ENCODE measurements at regions of chr13 and their contacts with region 1.

Region 1: GRCh38 chr13:59906413-59907049 is 257.2 kb downstream of the DIAPH3 start:
- DNase-seq: peak; percentile 75
- H3K4me3 ChIP-seq: no peak overlapping the region
- H3K27ac ChIP-seq: peak overlapping the region; percentile 64
- H3K4me1 ChIP-seq: peaks cover 32% of the 10 kb centered on the region
- H3K27me3 ChIP-seq: no peaks in the 10 kb centered on the region
- CTCF ChIP-seq: peak; percentile 79

Region 2: GRCh38 chr13:59391696-59392095 is 514.8 kb before region 1 on chr13:
- CTCF ChIA-PET with region 1: no interaction called
- POLR2A ChIA-PET with region 1: no interaction called
- intact Hi-C with region 1: loop called (anchors 10 kb)
- DNase-seq: peak; percentile 91
- H3K4me3 ChIP-seq: no peak overlapping the region
- H3K27ac ChIP-seq: peak overlapping the region; percentile 58
- H3K4me1 ChIP-seq: peaks cover 23% of the 10 kb centered on the region
- H3K27me3 ChIP-seq: no peaks in the 10 kb centered on the region
- CTCF ChIP-seq: peak; percentile 93

Region 3: GRCh38 chr13:59771272-59771671 is 135.3 kb before region 1 on chr13:
- CTCF ChIA-PET with region 1: interaction called, 3 read pairs
- POLR2A ChIA-PET with region 1: no interaction called
- intact Hi-C with region 1: loop called (anchors 5 kb)
- DNase-seq: peak; percentile 73
- H3K4me3 ChIP-seq: no peak overlapping the region
- H3K27ac ChIP-seq: peak overlapping the region; percentile 70
- H3K4me1 ChIP-seq: peaks cover 83% of the 10 kb centered on the region
- H3K27me3 ChIP-seq: no peaks in the 10 kb centered on the region
- CTCF ChIP-seq: peak; percentile 80

Measured in A673 (cell line).